ENCODE measurements at regions of chr1 and their contacts with region 1.

Region 1: GRCh38 chr1:22976461-22977243 is 4.0 kb upstream of the LACTBL1 start:
- DNase-seq: peak; percentile 51 to 68 (median 60)
- ATAC-seq: peak; percentile 89 to 93
- H3K4me3 ChIP-seq: no peak overlapping the region
- H3K27ac ChIP-seq: no peak overlapping the region
- H3K4me1 ChIP-seq: no peaks in the 10 kb centered on the region
- H3K27me3 ChIP-seq: no peaks in the 10 kb centered on the region

Region 2: DNA sequence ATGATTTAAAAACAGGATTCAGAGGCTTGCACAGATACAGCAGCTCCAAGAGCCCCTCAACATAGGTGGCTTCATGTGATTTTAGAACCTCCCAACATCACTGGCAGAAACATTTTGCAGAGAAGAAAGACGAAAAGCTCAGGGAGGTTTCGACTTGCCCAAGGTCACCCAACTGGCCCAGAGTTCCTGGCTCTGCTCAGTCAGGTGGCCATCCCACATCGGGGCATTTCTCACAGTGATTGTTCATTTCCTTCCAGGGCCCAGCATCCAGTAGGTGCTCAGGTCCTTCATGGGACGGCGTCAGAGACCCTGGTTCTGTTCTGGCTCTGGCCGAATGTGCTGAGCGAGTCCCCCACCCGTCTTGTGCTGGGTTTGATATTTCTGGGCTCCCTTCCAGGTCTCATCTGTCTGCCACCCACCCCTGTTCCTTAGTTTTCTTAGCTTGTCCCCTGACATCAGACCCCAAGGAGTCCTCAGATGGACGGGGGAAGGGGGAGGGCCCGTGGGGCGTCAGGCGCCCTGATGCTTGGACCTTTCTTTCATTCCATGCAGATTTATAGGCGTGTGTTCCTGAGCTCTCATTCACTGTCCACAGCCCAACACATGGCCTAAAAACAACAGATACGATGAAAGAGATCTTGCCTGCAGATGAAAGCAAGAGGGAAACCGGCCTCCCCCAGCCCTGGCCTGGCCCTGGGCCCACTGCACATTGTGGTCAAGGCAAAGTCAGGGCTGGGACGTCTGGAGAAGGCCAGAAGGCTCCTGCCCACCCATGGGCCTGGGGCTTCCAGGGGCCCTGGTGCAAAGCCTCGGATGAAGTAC is 648.1 kb before region 1 on chr1:
- intact Hi-C with region 1: no loop called
- DNase-seq: no peak
- ATAC-seq: no peak
- H3K4me3 ChIP-seq: no peak overlapping the region
- H3K27ac ChIP-seq: no peak overlapping the region
- H3K4me1 ChIP-seq: no peaks in the 10 kb centered on the region
- H3K27me3 ChIP-seq: no peaks in the 10 kb centered on the region

Region 3: DNA sequence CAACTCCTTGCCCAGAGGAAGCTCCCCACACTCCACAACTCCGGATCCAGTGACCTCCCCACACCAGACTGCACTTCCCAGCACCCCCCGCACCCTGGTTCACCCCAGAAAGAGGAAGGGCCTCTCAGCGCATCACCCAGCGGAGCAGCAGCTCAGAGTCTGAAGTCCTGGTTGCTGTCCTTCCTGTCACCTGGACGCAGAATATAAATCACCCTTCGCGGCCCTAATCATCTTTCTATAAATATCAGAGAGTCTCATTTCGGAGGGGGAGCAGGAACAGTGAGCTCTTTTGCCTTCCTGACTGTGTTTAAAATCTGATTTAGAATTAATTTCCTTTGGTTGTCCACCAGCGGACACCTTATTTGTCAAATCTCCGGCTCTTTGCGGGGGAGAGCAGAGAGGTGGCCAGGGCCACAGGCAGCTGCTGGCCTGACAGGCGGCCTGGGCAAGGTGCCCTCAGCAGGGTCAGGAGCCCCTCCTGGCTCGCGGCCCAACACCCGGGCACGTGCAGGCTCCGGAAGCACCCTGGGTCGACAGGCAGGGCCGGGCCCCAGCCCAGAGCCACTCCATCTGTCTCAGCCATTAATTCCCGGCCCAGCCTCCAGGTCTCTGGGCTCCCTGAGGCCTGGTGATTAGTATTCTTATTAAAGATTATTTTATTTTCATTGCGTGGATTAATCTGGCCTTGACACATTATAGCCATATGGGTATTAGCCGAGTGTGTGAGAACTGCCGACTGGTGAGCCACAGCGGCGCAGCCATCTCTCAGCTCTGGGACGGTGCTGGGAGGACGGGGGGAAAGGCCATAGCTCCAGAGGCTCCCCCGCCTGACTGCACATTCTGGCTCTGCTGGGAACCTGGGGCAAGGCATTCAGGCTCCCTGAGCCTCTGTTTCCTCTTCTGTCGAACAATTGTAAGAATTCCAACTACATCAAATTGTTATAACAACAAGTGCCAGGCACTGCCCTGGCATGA is 393.7 kb before region 1 on chr1:
- intact Hi-C with region 1: no loop called
- DNase-seq: peak in 2 of 3 donors; percentile 10 to 12
- ATAC-seq: peak in 1 of 2 donors; percentile 48
- H3K4me3 ChIP-seq: no peak overlapping the region
- H3K27ac ChIP-seq: peak overlapping the region; percentile 25
- H3K4me1 ChIP-seq: no peaks in the 10 kb centered on the region
- H3K27me3 ChIP-seq: no peaks in the 10 kb centered on the region

Region 4: DNA sequence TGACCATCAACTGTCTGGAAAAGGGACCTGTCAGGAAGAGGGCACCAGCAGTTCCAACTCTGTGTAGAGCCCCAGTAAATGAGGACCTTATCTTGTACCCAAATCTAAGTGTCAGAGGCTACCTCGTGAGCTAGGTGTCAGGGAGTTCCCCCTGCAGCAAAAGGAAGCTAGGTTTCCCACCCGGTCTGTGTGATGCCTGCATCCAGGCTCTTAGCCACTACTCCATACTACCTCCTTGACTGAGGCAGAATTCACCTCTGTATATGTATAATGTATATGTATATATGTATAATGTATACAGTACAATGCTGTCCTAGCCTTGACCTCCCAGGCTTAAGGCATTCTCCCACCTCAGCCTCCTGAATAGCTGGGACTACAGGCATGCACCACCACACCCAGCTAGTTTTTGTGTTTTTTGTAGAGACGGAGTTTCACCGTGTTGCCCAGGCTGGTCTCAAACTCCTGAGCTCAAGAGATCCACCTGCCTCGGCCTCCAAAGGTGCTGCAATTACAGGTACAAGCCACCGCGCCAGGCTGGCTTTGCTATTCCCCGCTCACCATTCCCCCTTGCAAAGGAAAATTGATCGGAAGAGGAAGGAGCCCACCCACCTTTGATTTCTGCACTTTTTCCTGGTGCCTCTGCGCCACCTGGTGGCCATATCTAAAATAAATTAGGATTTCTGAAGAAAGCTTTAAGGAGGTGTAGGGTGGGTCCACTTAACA is 207.7 kb after region 1 on chr1:
- intact Hi-C with region 1: loop called in 3 of 4 experiments (anchors 5 to 10 kb)
- DNase-seq: no peak
- ATAC-seq: peak; percentile 23 to 32
- H3K4me3 ChIP-seq: peak overlapping the region; percentile 36
- H3K27ac ChIP-seq: no peak overlapping the region
- H3K4me1 ChIP-seq: no peaks in the 10 kb centered on the region
- H3K27me3 ChIP-seq: no peaks in the 10 kb centered on the region

Measured in right cardiac atrium (tissue), 5 donors.